ENCODE measurements at regions of chr1 and their contacts with region 1.

Region 1: GRCh38 chr1:8026153-8026975 is at the start of gene ERRFI1:
- DNase-seq: peak; percentile 78 to 97
- H3K4me3 ChIP-seq: peak within 1 kb of the TSS; percentile 85 to 94
- H3K27ac ChIP-seq: peak within 1 kb of the TSS; percentile 98 to 99
- H3K4me1 ChIP-seq: peaks cover 0 to 34% of the 10 kb centered on the region in 2 donors
- H3K27me3 ChIP-seq: no peaks in the 10 kb centered on the region
- CTCF ChIP-seq: no peak
- total RNA-seq, gene ERRFI1: 59.7 TPM

Region 2: DNA sequence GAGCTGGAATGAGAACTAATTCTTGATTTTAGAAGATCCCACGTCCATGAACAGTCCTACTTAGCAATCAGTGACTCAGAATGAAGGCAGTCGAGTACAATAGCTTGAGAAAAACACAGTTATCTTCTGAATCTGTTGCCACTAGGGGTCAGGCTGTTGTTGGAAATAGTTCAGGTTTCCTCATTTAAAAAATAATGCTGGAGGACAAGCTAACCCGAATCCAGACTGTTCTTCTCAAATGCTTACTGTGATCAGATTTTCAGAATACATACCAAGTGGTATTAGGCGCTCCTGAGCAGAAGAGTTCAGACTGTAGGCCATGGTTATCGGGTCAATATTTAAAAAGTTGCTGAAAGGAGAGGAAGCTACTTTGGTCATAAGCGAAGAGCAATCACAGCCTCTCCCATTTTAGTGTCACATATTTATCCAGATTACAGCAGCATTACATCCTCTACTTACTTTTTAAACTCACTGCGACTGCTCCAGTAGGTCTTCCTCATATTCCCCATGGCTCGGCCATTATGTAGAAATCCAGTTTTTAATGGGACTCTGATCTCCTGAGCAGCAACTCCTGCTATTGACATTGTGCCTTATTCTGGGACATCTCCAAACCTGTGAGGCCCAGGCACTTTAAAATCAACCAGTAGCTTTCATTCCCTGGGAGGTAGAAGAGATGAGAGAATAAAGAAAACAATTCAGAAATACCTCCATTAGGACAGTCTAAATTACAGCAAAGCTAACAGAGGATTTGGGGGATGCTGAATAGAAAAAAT is 11.1 kb before region 1 on chr1:
- intact Hi-C with region 1: no loop called
- DNase-seq: peak in 1 of 2 donors; percentile 75
- H3K4me3 ChIP-seq: peak overlapping the region; percentile 11 to 41
- H3K27ac ChIP-seq: peak overlapping the region; percentile 65 to 68
- H3K4me1 ChIP-seq: peaks cover 12 to 35% of the 10 kb centered on the region in 2 donors
- H3K27me3 ChIP-seq: no peaks in the 10 kb centered on the region
- CTCF ChIP-seq: peak; percentile 42 to 58 (median 47)

Region 3: GRCh38 chr1:8061210-8061609 is 34.8 kb after region 1 on chr1:
- intact Hi-C with region 1: loop called (anchors 5 kb)
- DNase-seq: peak; percentile 28 to 84
- H3K4me3 ChIP-seq: peak overlapping the region in 1 of 2 donors; percentile 49
- H3K27ac ChIP-seq: peak overlapping the region; percentile 78 to 89
- H3K4me1 ChIP-seq: peaks cover 0 to 33% of the 10 kb centered on the region in 2 donors
- H3K27me3 ChIP-seq: no peaks in the 10 kb centered on the region
- CTCF ChIP-seq: no peak

Region 4: DNA sequence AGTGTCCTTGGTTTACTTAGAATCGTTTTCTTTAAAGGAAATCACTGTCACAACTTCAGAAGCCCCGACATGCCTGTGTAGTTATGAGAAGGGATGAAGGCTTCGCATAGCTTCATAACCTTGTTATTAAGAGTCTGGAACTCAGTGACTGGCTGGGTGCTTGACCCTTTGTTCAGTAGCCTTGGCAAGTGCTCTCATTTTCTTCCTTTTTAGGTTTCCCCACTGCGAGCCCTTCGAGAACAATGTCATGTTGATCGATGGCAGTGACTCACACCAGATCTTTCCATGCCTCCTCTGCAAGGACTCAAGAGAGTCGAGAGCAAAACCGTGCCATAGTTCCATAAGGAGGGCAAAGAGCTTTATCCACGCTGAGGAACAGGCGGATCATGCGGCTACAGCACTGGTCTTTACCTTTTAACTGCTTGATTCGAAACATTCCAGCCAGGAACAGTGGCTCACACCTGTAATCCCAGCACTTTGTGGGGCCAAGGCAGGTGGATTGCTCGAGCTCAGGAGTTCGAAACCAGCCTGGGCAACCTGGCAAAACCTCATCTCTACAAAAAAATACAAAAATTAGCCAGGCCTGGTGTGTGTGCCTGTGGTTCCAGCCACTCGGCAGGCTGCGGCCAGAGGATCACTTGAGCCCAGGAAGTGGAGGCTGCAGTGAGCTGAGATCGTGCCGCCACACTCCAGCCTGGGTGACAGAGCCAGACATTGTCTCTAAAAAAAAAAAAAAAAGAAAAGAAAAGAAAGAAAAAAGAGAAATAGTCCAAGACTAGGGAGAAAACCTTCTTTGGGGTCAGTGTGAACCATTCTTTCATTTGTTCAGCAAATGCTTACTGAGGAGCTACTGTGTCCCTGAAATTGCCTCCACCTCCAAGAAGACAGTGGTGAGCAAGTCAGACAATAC is 95.2 kb after region 1 on chr1:
- intact Hi-C with region 1: loop called (anchors 1 kb)
- DNase-seq: peak; percentile 67 to 95
- H3K4me3 ChIP-seq: peak overlapping the region; percentile 1 to 49
- H3K27ac ChIP-seq: peak overlapping the region; percentile 95 to 96
- H3K4me1 ChIP-seq: peaks cover 25 to 61% of the 10 kb centered on the region in 2 donors
- H3K27me3 ChIP-seq: no peaks in the 10 kb centered on the region
- CTCF ChIP-seq: no peak

Region 5: DNA sequence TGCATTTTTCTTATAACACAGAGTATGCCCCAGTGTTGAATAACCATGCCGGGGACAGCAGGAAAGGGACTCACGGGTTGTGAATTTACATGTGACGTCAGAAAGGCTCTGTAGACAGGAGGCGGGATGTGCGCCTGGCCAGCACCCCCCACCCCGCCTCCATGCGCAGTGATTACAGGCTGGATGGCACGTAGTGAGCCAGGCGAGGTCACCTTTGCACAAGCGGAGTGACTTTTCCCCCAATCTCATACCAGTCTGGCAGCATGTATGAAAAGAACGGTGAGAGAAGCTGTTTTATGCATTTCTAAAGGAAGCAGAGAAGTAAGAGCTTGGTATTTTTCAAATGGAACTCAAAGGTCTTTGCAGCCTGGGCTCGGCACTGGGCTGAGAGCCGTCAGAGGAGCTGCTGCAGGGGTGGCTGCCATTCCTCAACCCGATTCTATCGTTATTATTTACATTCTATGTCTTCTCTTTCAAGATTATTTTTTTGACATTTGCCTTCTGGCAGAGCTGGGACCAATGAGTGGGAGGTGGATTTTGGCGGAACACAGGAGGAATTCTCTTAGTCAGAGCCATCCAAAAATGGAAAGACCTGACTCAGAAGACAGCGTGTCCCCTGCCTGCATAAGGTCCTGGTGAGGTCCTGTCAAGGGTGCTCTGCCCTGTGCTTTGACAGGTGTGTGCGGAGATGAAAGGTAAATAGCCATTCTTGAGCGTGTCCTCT is 176.0 kb after region 1 on chr1:
- intact Hi-C with region 1: loop called (anchors 2 kb)
- DNase-seq: peak; percentile 57 to 94
- H3K4me3 ChIP-seq: peak overlapping the region in 1 of 2 donors; percentile 32
- H3K27ac ChIP-seq: peak overlapping the region; percentile 97 to 99
- H3K4me1 ChIP-seq: peaks cover 17 to 52% of the 10 kb centered on the region in 2 donors
- H3K27me3 ChIP-seq: no peaks in the 10 kb centered on the region
- CTCF ChIP-seq: no peak

Region 6: GRCh38 chr1:8314346-8315280 is 288.2 kb after region 1 on chr1:
- intact Hi-C with region 1: loop called (anchors 1 kb)
- DNase-seq: peak in 1 of 2 donors; percentile 83
- H3K4me3 ChIP-seq: no peak overlapping the region
- H3K27ac ChIP-seq: no peak overlapping the region
- H3K4me1 ChIP-seq: peaks cover 0 to 14% of the 10 kb centered on the region in 2 donors
- H3K27me3 ChIP-seq: no peaks in the 10 kb centered on the region
- CTCF ChIP-seq: peak; percentile 84 to 92 (median 87)

Measured in ascending aorta (tissue), 2 donors.